WTC11 (cell line): ENCODE measurements at regions of chr4 and their contacts with region 1.

Region 1: DNA sequence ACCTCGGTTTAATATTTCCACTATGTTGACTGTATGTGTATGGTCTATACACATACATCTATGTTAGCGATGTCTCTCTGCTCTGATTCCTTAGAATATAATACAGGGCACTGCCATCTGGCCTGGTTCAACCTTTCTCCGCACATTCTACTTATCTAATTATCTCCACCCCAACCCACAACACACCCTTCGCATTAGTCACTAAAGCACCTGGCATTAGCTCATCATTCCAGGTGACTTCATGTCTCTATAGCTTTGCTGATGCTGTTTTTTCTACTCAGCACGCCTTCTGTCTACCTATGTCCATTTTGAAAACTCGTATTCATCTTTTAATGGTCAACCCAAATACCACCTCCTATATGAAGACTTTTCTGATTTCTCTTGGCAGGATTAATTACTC is 425.2 kb upstream of the RASGEF1B start:
- DNase-seq: no peak
- ATAC-seq: no peak
- H3K4me3 Mint-ChIP-seq: no peak overlapping the region
- H3K27ac Mint-ChIP-seq: no peak overlapping the region
- H3K4me1 Mint-ChIP-seq: peaks cover 20% of the 10 kb centered on the region
- H3K27me3 Mint-ChIP-seq: no peaks in the 10 kb centered on the region
- CTCF ChIP-seq: no peak

Region 2: GRCh38 chr4:81030061-81030980 is 866.6 kb before region 1 on chr4 and contains the start of gene BMP3:
- CTCF ChIA-PET with region 1: no interaction called
- POLR2A ChIA-PET with region 1: no interaction called
- DNase-seq: peak; percentile 36
- ATAC-seq: peak; percentile 85
- H3K4me3 Mint-ChIP-seq: peak within 1 kb of the TSS; percentile 97
- H3K27ac Mint-ChIP-seq: no peak within 1 kb of the TSS
- H3K4me1 Mint-ChIP-seq: peaks cover 35% of the 10 kb centered on the region
- H3K27me3 Mint-ChIP-seq: peaks cover 67% of the 10 kb centered on the region
- CTCF ChIP-seq: no peak
- total RNA-seq, gene BMP3: 0.53 to 0.55 TPM (median 0.55 TPM) in 3 replicates

Region 3: GRCh38 chr4:81796790-81797528 is 100.0 kb before region 1 on chr4:
- CTCF ChIA-PET with region 1: no interaction called
- POLR2A ChIA-PET with region 1: no interaction called
- DNase-seq: no peak
- ATAC-seq: no peak
- H3K4me3 Mint-ChIP-seq: no peak overlapping the region
- H3K27ac Mint-ChIP-seq: no peak overlapping the region
- H3K4me1 Mint-ChIP-seq: 0 out of 2 replicates have a peak, but pooled peaks cover 3% of the 10 kb centered on the region
- H3K27me3 Mint-ChIP-seq: no peaks in the 10 kb centered on the region
- CTCF ChIP-seq: no peak

Region 4: GRCh38 chr4:81874661-81875515 is 22.0 kb before region 1 on chr4:
- CTCF ChIA-PET with region 1: no interaction called
- POLR2A ChIA-PET with region 1: no interaction called
- DNase-seq: no peak
- ATAC-seq: peak; percentile 24; the same call in 1 of the 2 replicates
- H3K4me3 Mint-ChIP-seq: 0 out of 2 replicates have a peak overlapping the region, but pooled peaks have one; percentile 4
- H3K27ac Mint-ChIP-seq: peak overlapping the region; percentile 77
- H3K4me1 Mint-ChIP-seq: peaks cover 40% of the 10 kb centered on the region
- H3K27me3 Mint-ChIP-seq: no peaks in the 10 kb centered on the region
- CTCF ChIP-seq: no peak

Region 5: GRCh38 chr4:81913427-81913879 is 16.5 kb after region 1 on chr4:
- CTCF ChIA-PET with region 1: interaction called, 14 read pairs
- POLR2A ChIA-PET with region 1: no interaction called
- DNase-seq: peak; percentile 79
- ATAC-seq: peak; percentile 96
- H3K4me3 Mint-ChIP-seq: peak overlapping the region; percentile 54
- H3K27ac Mint-ChIP-seq: no peak overlapping the region; the same call in 1 of the 2 replicates
- H3K4me1 Mint-ChIP-seq: peaks cover 9% of the 10 kb centered on the region
- H3K27me3 Mint-ChIP-seq: no peaks in the 10 kb centered on the region
- CTCF ChIP-seq: peak; percentile 85

Region 6: GRCh38 chr4:82071951-82072350 is 175.0 kb after region 1 on chr4:
- CTCF ChIA-PET with region 1: no interaction called
- POLR2A ChIA-PET with region 1: no interaction called
- DNase-seq: no peak
- ATAC-seq: no peak
- H3K4me3 Mint-ChIP-seq: no peak overlapping the region
- H3K27ac Mint-ChIP-seq: no peak overlapping the region
- H3K4me1 Mint-ChIP-seq: peaks cover 28% of the 10 kb centered on the region
- H3K27me3 Mint-ChIP-seq: no peaks in the 10 kb centered on the region
- CTCF ChIP-seq: no peak